Activated T-helper 1 cell treated with anti-CD3 and anti-CD28 coated beads, Interleukin-12 subunit alpha, Interleukin-12 subunit beta, Interleukin-2, Interleukin-4 antibody, amounts not matched to agents 30 ng/mL and 10 ng/mL and 1 ng/mL, durations not matched to agents 14 hours and 24 hours and 36 hours (primary cell): ENCODE measurements at regions of chr7 and their contacts with region 1.

Region 1: DNA sequence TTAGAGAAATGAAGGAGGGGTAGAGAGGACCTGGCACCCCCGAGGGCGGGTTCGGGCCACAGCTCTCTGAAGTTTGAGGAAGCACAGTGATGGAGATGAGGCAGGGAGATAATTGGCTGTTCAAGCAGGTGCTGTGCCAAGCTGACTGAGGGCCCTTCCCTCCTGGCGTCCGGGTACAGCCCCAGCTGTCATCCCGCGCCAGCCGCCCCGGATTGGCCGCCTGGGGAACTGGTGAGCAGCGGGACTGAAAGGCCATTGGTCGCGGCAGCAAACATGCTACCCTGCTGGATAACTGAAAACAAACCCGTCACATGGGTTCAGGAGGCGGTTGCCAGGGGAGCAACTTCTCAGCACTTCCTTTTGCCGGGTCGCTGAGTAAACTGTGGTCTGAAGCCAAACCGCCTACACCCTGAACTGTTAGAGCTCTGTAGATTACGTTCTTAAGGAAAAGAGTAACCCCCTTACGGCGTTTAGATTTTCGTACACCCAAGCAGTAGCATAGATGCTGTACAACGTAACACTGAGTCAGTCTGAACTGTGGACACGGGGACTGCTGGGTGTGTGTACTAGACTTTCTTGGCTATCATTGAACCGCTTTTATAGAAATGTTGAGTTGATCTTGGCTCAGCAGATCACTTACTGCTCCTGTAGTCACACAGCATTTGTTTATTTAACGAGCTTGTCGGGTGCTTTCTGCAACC is 1.3 kb downstream of the INSIG1 start:
- DNase-seq: peak; percentile 96
- H3K4me3 Mint-ChIP-seq: peak overlapping the region; percentile 91
- H3K27ac Mint-ChIP-seq: peak overlapping the region; percentile 97
- H3K4me1 Mint-ChIP-seq: peaks cover 46% of the 10 kb centered on the region
- H3K27me3 Mint-ChIP-seq: no peaks in the 10 kb centered on the region

Region 2: DNA sequence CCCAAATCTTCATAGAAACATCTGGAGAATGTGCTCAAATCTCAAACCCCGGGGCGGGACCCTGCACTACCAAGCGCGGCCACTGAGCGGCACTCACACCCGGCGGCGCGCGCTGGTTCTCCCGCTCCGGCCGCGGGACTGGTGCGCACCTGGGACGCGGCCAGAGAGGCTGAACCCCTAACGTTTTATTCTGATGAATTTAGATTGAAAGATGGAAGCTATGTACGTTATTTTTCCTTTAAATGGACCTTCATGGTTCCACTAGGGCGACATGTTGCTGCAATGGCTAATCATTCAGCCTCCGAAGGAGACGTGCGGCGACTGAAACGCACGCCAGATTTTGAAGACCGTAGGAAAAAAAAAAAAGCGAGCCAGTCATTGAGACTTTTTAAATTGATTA is 108.3 kb before region 1 on chr7:
- intact Hi-C with region 1: loop called (anchors 1 kb)
- DNase-seq: peak; percentile 44
- H3K4me3 Mint-ChIP-seq: no peak overlapping the region
- H3K27ac Mint-ChIP-seq: peak overlapping the region; percentile 55
- H3K4me1 Mint-ChIP-seq: peaks cover 17% of the 10 kb centered on the region
- H3K27me3 Mint-ChIP-seq: peaks cover 13% of the 10 kb centered on the region

Region 3: DNA sequence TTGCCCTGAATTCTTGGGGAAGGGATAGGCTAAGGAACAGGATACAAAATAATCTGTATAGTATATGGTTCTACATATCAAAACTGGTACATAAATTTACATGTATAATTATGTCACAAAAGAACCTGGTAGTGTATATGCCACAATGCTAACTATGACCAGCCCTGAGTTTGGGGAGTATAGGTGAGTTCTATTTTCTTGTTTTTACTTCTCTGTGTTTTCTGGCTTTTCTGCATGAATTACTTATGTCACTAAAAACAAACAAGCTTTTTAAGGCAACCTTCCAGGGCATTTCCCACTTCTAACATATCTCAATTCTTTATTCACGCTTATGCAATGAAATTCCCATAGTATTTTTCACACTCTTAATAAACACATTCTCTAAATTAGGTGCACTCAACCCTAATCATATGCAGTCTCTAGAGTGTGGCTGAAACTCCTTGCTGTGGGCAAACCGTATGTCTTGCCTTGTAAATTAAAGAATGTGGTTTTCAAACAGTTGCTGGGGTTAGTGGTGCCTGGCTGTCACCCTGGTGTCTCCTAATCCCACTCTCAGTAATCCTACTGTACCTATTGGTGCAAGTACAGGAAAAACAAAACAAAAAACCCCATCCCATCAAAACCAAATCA is 15.3 kb before region 1 on chr7:
- intact Hi-C with region 1: loop called (anchors 1 kb)
- DNase-seq: no peak
- H3K4me3 Mint-ChIP-seq: no peak overlapping the region
- H3K27ac Mint-ChIP-seq: no peak overlapping the region
- H3K4me1 Mint-ChIP-seq: peaks cover 79% of the 10 kb centered on the region
- H3K27me3 Mint-ChIP-seq: peaks cover 4% of the 10 kb centered on the region

Region 4: DNA sequence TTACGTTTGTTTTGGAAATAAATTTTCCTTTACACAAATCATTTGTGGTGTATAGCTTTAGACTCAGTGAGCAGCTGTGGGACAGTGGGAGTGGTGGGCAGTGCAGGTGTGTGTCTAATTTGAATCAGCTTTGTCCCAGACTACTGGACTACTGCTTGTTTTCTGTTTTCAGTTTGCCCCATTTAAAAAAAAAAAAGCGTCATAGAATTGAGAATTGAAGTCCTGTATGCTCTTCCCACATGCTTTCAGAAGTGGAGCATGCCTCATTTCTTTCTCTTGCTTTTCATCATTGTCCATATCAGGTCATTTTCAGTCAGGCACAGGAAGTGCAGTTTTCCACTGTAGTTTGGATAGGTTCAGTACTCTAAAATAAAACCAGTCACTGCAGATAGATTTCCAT is 447.2 kb after region 1 on chr7:
- intact Hi-C with region 1: loop called (anchors 5 kb)
- DNase-seq: no peak
- H3K4me3 Mint-ChIP-seq: no peak overlapping the region
- H3K27ac Mint-ChIP-seq: peak overlapping the region; percentile 68
- H3K4me1 Mint-ChIP-seq: peaks cover 67% of the 10 kb centered on the region
- H3K27me3 Mint-ChIP-seq: no peaks in the 10 kb centered on the region

Region 5: GRCh38 chr7:156892821-156893706 is 1594.1 kb after region 1 on chr7 and contains the start of gene LMBR1:
- intact Hi-C with region 1: loop called (anchors 1 kb)
- DNase-seq: peak; percentile 92
- H3K4me3 Mint-ChIP-seq: peak within 1 kb of the TSS; percentile 95
- H3K27ac Mint-ChIP-seq: peak within 1 kb of the TSS; percentile 93
- H3K4me1 Mint-ChIP-seq: peaks cover 43% of the 10 kb centered on the region
- H3K27me3 Mint-ChIP-seq: no peaks in the 10 kb centered on the region
- total RNA-seq, gene LMBR1: 53.5 and 55.5 TPM in 2 replicates